ENCODE measurements at regions of chr19 and their contacts with region 1.

Region 1: DNA sequence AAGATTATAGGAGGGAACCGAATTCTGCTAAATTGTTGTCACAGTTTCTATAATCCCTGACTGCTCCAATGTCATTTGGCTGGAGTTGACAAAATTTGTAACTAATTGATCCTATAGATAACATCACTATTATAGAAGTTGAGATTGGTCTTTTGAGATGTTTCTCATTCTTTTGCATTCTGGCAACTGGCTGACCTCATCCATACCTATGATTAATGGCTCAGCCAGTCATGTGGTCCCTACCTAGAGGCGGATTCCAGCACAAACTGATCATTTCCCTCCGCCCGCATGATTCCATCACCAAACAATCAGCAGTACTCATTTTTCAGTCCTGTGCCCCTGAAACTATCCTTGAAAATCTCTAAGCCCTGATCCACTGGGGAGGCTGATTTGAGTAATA is 4.2 kb downstream of the PSG2 start:
- DNase-seq: no peak
- H3K4me3 Mint-ChIP-seq: no peak overlapping the region
- H3K27ac Mint-ChIP-seq: no peak overlapping the region
- H3K4me1 Mint-ChIP-seq: no peaks in the 10 kb centered on the region
- H3K27me3 Mint-ChIP-seq: peaks cover 50% of the 10 kb centered on the region
- CTCF ChIP-seq: no peak

Region 2: GRCh38 chr19:42881229-42881628 is 197.1 kb before region 1 on chr19:
- CTCF ChIA-PET with region 1: no interaction called
- intact Hi-C with region 1: no loop called
- DNase-seq: peak; percentile 23
- H3K4me3 Mint-ChIP-seq: no peak overlapping the region
- H3K27ac Mint-ChIP-seq: no peak overlapping the region
- H3K4me1 Mint-ChIP-seq: peaks cover 21% of the 10 kb centered on the region
- H3K27me3 Mint-ChIP-seq: peaks cover 14% of the 10 kb centered on the region
- CTCF ChIP-seq: peak; percentile 47

Region 3: GRCh38 chr19:43152217-43152616 is 73.9 kb after region 1 on chr19:
- CTCF ChIA-PET with region 1: interaction called, 12 read pairs
- intact Hi-C with region 1: no loop called
- DNase-seq: peak; percentile 14
- H3K4me3 Mint-ChIP-seq: no peak overlapping the region
- H3K27ac Mint-ChIP-seq: peak overlapping the region; percentile 30
- H3K4me1 Mint-ChIP-seq: peaks cover 25% of the 10 kb centered on the region
- H3K27me3 Mint-ChIP-seq: no peaks in the 10 kb centered on the region
- CTCF ChIP-seq: no peak